PC-3 (cell line): ENCODE measurements at regions of chr5 and their contacts with region 1.

Region 1: GRCh38 chr5:156879665-156880285 is 29.7 kb downstream of the PPP1R2B start:
- DNase-seq: peak; percentile 13
- ATAC-seq: no peak
- H3K4me3 ChIP-seq: no peak overlapping the region
- H3K27ac ChIP-seq: no peak overlapping the region
- H3K4me1 ChIP-seq: no peaks in the 10 kb centered on the region
- H3K27me3 ChIP-seq: peaks cover 28% of the 10 kb centered on the region
- CTCF ChIP-seq: no peak

Region 2: DNA sequence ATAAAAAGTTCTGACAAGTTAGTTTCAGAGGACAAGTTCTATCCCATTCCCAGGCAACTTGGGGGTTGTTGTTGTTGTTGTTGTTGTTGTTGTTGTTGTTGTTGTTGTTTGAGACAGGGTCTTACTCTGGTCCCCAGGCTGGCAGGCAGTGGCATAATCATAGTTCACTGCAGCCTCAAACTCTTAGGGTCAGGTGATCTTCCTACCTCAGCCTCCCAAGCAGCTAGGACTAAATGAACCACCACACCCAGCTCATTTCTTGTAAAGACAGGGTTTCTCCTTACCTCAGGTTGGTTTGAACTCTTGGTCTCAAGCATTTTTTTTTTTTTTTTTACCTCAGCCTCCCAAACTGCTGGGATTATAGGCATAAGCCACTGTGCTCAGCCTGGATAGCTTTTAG is 14.3 kb before region 1 on chr5:
- CTCF ChIA-PET with region 1: no interaction called
- POLR2A ChIA-PET with region 1: interaction called, 12 read pairs
- intact Hi-C with region 1: no loop called
- DNase-seq: no peak
- ATAC-seq: no peak
- H3K4me3 ChIP-seq: no peak overlapping the region
- H3K27ac ChIP-seq: no peak overlapping the region
- H3K4me1 ChIP-seq: no peaks in the 10 kb centered on the region
- H3K27me3 ChIP-seq: 0 out of 2 replicates have a peak, but pooled peaks cover 14% of the 10 kb centered on the region
- CTCF ChIP-seq: no peak

Region 3: DNA sequence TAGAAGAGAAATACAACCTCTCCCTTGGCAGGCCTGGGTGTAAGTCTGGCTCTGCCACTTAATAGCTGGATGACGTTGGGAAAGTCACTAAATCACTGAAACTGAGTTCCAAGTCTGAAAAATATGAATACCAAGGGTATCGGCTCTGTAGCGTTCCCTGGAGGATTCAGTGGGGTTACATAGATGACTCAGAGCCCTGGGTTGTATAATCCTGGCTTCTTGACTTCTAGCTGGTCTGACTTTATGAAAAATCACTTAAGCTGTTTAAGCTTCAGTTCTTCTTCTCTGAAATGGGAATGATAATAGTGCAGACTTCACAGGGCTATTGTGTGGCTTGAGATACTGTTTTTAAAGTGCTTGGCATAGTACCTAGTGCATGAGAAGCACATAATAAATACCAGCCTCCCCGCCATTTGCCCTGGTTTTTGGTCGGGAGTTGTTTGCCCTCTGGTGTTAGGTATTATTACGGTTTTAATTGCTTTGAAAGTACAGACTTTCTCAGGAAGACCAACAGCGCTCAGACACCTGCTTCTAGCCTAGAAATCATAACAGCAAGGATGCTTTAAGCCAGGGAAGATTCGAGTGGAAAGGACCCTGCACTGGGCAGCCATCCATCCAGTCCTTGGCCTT is 429.2 kb after region 1 on chr5:
- CTCF ChIA-PET with region 1: no interaction called
- POLR2A ChIA-PET with region 1: no interaction called
- intact Hi-C with region 1: no loop called
- DNase-seq: peak; percentile 30
- ATAC-seq: no peak
- H3K4me3 ChIP-seq: no peak overlapping the region
- H3K27ac ChIP-seq: no peak overlapping the region
- H3K4me1 ChIP-seq: no peaks in the 10 kb centered on the region
- H3K27me3 ChIP-seq: no peaks in the 10 kb centered on the region
- CTCF ChIP-seq: peak; percentile 48; the same call in 1 of the 2 replicates